ENCODE measurements at regions of chrX and their contacts with region 1.

Region 1: GRCh38 chrX:129726307-129727111 is 12.3 kb upstream of the XPNPEP2 start:
- DNase-seq: no peak
- H3K4me3 ChIP-seq: no peak overlapping the region
- H3K27ac ChIP-seq: no peak overlapping the region
- H3K27me3 ChIP-seq: no peaks in the 10 kb centered on the region
- CTCF ChIP-seq: peak; percentile 78

Region 2: GRCh38 chrX:129606918-129607317 is 119.6 kb before region 1 on chrX:
- CTCF ChIA-PET with region 1: interaction called, 52 read pairs
- POLR2A ChIA-PET with region 1: no interaction called
- DNase-seq: no peak
- H3K4me3 ChIP-seq: no peak overlapping the region
- H3K27ac ChIP-seq: no peak overlapping the region
- H3K27me3 ChIP-seq: peaks cover 2% of the 10 kb centered on the region
- CTCF ChIP-seq: peak; percentile 61

Region 3: GRCh38 chrX:129637217-129638109 is 89.0 kb before region 1 on chrX:
- CTCF ChIA-PET with region 1: interaction called, 145 read pairs
- POLR2A ChIA-PET with region 1: no interaction called
- DNase-seq: no peak
- H3K4me3 ChIP-seq: no peak overlapping the region
- H3K27ac ChIP-seq: no peak overlapping the region
- H3K27me3 ChIP-seq: peaks cover 3% of the 10 kb centered on the region
- CTCF ChIP-seq: peak; percentile 80

Region 4: DNA sequence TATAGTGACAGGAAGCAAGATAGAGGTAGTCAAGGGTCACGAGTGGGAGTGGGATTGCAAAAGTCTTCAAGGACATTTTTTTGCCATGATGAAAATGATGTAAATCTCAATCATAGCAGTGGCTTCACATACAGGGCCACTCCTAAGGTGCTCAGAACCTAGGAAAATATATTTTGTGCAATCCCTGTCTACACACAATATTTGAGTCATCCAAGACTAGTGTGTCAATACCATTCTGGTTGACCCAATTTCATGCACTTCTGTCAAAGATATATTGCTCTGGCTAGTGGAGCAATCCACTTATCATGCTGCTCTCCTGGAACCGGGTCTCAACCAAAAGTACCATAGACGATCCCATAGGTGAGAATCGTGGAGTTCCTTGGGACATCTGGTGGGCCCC is 11.9 kb before region 1 on chrX:
- CTCF ChIA-PET with region 1: interaction called, 11 read pairs
- POLR2A ChIA-PET with region 1: no interaction called
- DNase-seq: no peak
- H3K4me3 ChIP-seq: no peak overlapping the region
- H3K27ac ChIP-seq: no peak overlapping the region
- H3K27me3 ChIP-seq: peaks cover 3% of the 10 kb centered on the region
- CTCF ChIP-seq: no peak

Region 5: DNA sequence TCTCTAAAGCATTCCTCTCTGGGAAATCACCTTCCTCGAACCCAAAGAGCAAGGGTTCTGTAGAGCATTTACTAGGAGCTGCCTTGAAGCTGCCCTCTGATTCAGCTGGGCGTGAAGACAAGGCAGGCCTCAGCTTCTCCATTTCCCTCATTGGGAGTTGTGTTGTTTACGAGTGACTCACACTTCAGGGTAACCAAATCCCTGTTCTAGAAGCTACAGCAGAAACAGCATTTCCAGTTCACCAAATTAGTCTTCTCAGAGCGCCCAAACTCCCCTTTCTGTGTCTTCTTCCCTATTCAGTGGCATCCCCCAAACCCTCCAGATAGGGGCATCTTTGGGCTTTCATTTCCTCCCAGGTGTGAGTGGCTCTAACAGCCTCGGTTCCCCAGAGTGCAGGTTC is 11.4 kb after region 1 on chrX:
- CTCF ChIA-PET with region 1: interaction called, 16 read pairs
- POLR2A ChIA-PET with region 1: no interaction called
- DNase-seq: no peak
- H3K4me3 ChIP-seq: no peak overlapping the region
- H3K27ac ChIP-seq: no peak overlapping the region
- H3K27me3 ChIP-seq: no peaks in the 10 kb centered on the region
- CTCF ChIP-seq: no peak